Esophagus squamous epithelium (tissue), 5 donors: ENCODE measurements at regions of chr2 and their contacts with region 1.

Region 1: GRCh38 chr2:174465327-174465726 is 21.5 kb downstream of the GPR155 start:
- DNase-seq: no peak
- H3K4me3 ChIP-seq: no peak overlapping the region
- H3K27ac ChIP-seq: no peak overlapping the region
- H3K4me1 ChIP-seq: no peaks in the 10 kb centered on the region
- H3K27me3 ChIP-seq: no peaks in the 10 kb centered on the region
- CTCF ChIP-seq: no peak
- POLR2A ChIP-seq: no peak

Region 2: GRCh38 chr2:174522553-174522952 is 57.2 kb after region 1 on chr2:
- intact Hi-C with region 1: loop called (anchors 10 kb)
- DNase-seq: no peak
- H3K4me3 ChIP-seq: no peak overlapping the region
- H3K27ac ChIP-seq: peak overlapping the region in 1 of 4 donors; percentile 16
- H3K4me1 ChIP-seq: no peaks in the 10 kb centered on the region
- H3K27me3 ChIP-seq: no peaks in the 10 kb centered on the region
- CTCF ChIP-seq: peak in 4 of 6 experiments; percentile 9 to 40 (median 17)
- POLR2A ChIP-seq: no peak

Region 3: DNA sequence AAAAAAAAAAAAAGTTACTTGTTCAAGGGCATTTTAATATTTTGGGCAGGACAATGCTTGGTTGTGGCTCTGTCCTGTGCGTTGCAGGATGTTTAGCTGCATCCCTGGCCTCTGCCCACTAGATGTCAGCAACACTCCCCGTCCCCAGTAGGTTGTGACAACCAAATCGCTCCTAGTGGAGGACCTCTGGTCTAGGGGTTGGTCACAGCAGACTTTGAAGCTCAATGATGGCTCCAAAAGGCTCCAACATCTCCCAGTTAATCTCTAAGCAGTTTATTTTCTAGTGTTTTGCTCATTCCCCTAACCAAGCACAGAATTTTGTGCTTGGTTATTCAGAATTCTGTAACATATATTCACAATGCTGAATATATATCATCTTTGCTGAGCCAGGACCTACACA is 231.9 kb after region 1 on chr2:
- intact Hi-C with region 1: loop called (anchors 10 kb)
- DNase-seq: no peak
- H3K4me3 ChIP-seq: no peak overlapping the region
- H3K27ac ChIP-seq: no peak overlapping the region
- H3K4me1 ChIP-seq: no peaks in the 10 kb centered on the region
- H3K27me3 ChIP-seq: peaks cover 0 to 16% (median 0%) of the 10 kb centered on the region in 4 donors
- CTCF ChIP-seq: peak; percentile 25 to 67 (median 58)
- POLR2A ChIP-seq: no peak